ENCODE measurements at regions of chr14 and their contacts with region 1.

Region 1: GRCh38 chr14:64891839-64892375 is 12.2 kb upstream of the SPTB start:
- DNase-seq: no peak
- H3K4me3 Mint-ChIP-seq: no peak overlapping the region
- H3K27ac Mint-ChIP-seq: no peak overlapping the region
- H3K4me1 Mint-ChIP-seq: no peaks in the 10 kb centered on the region
- H3K27me3 Mint-ChIP-seq: no peaks in the 10 kb centered on the region

Region 2: DNA sequence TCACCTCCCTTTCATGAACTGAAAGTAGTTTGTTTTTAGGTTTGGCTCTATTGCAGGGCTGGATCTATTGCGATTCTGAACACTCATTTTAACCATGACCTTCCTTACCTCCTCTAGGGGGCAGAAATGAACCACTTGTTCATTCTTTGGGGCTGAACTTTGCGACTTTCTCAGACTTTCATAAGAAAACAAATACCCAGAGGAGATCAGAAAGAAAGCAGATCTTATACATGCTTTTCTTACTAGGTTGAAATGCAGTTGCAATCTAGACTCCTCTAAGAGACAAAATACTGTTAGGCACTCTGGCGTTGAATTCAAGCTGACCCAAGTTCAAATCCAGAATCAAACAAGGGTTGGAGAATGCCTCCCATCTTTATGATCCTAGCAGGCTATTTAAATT is 220.3 kb before region 1 on chr14:
- CTCF ChIA-PET with region 1: interaction called, 63 read pairs
- POLR2A ChIA-PET with region 1: no interaction called
- intact Hi-C with region 1: loop called (anchors 5 kb)
- DNase-seq: no peak
- H3K4me3 Mint-ChIP-seq: no peak overlapping the region
- H3K27ac Mint-ChIP-seq: no peak overlapping the region
- H3K4me1 Mint-ChIP-seq: peaks cover 24% of the 10 kb centered on the region
- H3K27me3 Mint-ChIP-seq: no peaks in the 10 kb centered on the region

Region 3: DNA sequence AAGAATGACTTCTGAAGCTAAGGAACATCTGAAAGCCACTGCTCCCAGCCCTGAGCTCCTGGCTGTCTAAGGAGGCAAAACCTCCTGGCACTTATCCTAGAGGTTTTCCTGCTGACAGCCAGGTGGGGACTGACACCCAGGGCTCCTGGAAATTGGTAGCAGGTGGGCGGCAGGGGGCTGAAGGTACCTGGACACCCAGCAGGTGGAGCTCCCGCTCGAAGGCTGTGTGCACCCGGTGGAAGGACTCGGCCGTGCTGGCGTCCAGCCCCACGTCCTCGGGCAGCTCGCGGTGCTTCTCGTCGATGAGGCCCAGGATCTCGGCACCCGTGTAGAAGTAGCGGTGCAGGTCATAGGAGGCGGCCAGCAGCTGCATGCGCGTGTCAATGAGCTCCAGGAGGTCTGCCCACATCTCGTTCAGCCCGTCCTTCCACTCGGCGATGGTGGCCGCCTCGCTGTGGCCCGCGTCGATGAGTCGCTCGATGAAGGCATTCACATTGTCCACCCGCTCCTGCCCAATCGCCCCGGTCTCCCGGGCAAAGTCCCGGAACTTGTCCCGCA is 119.4 kb before region 1 on chr14:
- CTCF ChIA-PET with region 1: interaction called, 15 read pairs
- POLR2A ChIA-PET with region 1: no interaction called
- intact Hi-C with region 1: no loop called
- DNase-seq: no peak
- H3K4me3 Mint-ChIP-seq: no peak overlapping the region
- H3K27ac Mint-ChIP-seq: no peak overlapping the region
- H3K4me1 Mint-ChIP-seq: peaks cover 14% of the 10 kb centered on the region
- H3K27me3 Mint-ChIP-seq: no peaks in the 10 kb centered on the region

Region 4: GRCh38 chr14:64823305-64823861 is 68.5 kb before region 1 on chr14:
- CTCF ChIA-PET with region 1: interaction called, 288 read pairs
- POLR2A ChIA-PET with region 1: interaction called, 7 read pairs
- intact Hi-C with region 1: loop called (anchors 5 kb)
- DNase-seq: peak; percentile 80
- H3K4me3 Mint-ChIP-seq: no peak overlapping the region
- H3K27ac Mint-ChIP-seq: no peak overlapping the region
- H3K4me1 Mint-ChIP-seq: no peaks in the 10 kb centered on the region
- H3K27me3 Mint-ChIP-seq: peaks cover 4% of the 10 kb centered on the region

Region 5: DNA sequence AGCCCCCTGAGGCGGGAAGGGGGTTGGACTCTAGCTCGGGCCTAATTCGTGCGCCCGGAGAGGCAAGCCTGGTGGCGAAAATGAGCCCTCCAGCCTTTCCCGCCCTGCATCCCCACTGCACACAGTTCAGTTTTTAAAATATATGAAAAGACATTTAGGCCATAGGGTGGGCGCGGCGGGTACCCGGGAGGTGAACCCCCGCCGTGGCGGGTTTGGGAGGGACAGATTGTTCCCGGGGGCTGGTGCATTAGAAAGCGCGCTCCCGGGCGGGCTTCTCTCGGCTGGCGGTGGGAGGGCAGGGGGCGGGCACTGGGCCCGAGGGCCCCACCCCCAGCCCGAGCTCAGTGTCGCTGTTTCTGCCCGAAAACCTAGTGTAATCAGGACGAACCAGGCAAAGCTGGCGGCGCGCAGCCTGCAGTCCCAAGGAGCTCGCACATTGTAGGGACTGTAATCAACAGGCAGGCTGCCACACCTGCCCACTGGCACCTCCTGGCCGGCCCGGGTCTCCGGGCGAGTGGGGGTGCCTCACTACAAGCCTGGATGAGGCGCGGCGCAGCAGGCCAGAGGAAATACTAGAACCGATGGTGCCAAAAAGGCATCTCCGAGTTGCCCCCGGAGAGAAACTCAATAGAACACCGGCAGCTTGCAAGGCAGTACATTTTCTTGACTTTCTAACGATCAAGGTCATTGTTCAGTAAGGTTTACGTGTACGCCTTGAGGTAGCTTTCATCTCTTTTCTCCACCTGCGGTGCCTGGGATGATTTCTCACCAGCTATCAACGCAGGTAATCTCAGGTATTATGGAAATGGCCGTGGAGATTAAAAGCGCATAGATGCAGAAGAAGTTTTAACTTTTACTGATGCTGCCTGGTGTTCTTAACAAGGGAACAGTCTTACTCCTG is 11.4 kb before region 1 on chr14:
- CTCF ChIA-PET with region 1: interaction called, 68 read pairs
- POLR2A ChIA-PET with region 1: no interaction called
- intact Hi-C with region 1: no loop called
- DNase-seq: peak; percentile 74
- H3K4me3 Mint-ChIP-seq: peak overlapping the region; percentile 77
- H3K27ac Mint-ChIP-seq: no peak overlapping the region
- H3K4me1 Mint-ChIP-seq: peaks cover 8% of the 10 kb centered on the region
- H3K27me3 Mint-ChIP-seq: peaks cover 29% of the 10 kb centered on the region

Region 6: DNA sequence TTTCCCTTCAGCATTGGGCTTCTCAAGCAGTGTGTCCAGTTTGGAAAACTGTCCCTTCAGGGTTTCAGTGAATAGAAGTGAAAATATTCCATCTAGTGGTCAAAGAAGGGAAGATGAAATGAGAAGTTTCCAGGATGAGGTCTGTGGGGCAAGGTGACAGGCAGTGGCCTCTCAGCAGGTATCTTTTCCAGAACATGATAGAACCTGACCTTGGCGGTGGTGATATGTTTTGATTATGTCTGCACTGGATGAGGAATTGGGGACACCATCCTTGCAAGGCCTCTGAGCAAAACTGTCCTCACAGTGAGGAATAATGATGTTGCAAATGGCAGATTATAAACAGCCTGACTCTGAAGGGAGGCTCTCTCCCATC is 45.9 kb after region 1 on chr14:
- CTCF ChIA-PET with region 1: interaction called, 10 read pairs
- POLR2A ChIA-PET with region 1: no interaction called
- intact Hi-C with region 1: no loop called
- DNase-seq: no peak
- H3K4me3 Mint-ChIP-seq: no peak overlapping the region
- H3K27ac Mint-ChIP-seq: peak overlapping the region; percentile 28
- H3K4me1 Mint-ChIP-seq: peaks cover 58% of the 10 kb centered on the region
- H3K27me3 Mint-ChIP-seq: no peaks in the 10 kb centered on the region

Region 7: GRCh38 chr14:65263177-65263788 is 371.4 kb after region 1 on chr14:
- CTCF ChIA-PET with region 1: no interaction called
- POLR2A ChIA-PET with region 1: no interaction called
- intact Hi-C with region 1: no loop called
- DNase-seq: no peak
- H3K4me3 Mint-ChIP-seq: no peak overlapping the region
- H3K27ac Mint-ChIP-seq: no peak overlapping the region
- H3K4me1 Mint-ChIP-seq: peaks cover 5% of the 10 kb centered on the region
- H3K27me3 Mint-ChIP-seq: no peaks in the 10 kb centered on the region

Measured in activated CD4-positive, alpha-beta memory T cell treated with anti-CD3 and anti-CD28 coated beads for 36 hours (primary cell).